T-cell (primary cell): ENCODE measurements at regions of chr12 and their contacts with region 1.

Region 1: DNA sequence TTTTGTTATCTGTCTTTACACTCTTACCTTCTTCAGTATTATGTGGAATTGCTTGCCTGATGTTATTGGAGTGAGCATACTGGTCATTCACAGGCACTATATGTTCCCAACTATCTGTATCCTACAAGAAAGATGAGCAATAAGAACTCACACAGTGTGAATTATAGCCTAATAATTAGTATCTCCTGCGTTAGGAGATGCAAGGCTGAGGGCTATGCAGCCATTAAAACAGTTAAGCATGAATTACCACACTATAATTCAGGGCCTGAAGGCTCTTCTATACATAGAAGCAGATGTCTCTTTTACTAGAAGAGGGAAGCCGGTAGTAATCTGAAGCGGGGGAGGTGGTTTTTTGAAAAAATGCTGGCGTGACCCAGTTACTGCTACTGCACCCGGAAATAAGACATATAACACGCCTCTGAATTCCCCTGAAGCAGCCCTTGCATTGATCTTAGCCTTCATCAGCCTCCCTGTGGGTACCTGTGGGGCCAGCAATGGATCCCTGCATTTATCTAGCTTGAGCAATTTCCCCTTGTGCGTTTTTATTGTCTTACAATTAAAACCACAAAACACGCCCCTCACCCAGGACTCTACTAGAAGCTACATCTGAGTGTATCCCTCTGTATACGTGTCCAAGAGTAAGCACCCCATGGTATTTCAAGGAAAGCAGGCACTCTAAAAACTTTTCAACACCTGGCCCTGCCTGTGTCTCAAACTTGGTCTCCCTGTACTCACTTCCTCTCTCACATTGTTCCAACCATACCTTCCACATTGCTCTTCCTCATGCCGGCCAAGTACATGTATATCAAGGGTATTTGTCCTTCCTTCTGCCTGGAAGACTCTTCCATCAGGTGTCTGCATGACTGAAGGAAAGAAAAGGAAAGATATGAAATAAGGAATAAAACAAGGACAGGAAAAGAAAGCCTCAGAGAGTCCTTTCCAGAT is 210.9 kb upstream of the ARID2 start:
- DNase-seq: peak in 34 of 35 experiments; percentile 9 to 80 (median 50)
- ATAC-seq: peak; percentile 94 to 99 (median 96)
- H3K4me3 ChIP-seq: no peak overlapping the region
- H3K4me3 Mint-ChIP-seq: peak overlapping the region in 1 of 3 donors; percentile 47
- H3K27ac ChIP-seq: peak overlapping the region; percentile 66
- H3K27ac Mint-ChIP-seq: peak overlapping the region; percentile 83 to 86
- H3K4me1 ChIP-seq: peaks cover 9 to 10% of the 10 kb centered on the region in 2 experiments
- H3K4me1 Mint-ChIP-seq: peaks cover 14 to 18% (median 17%) of the 10 kb centered on the region in 3 donors
- H3K27me3 ChIP-seq: peaks cover 0 to 2% of the 10 kb centered on the region in 2 experiments
- H3K27me3 Mint-ChIP-seq: no peaks in the 10 kb centered on the region

Region 2: GRCh38 chr12:45504316-45505010 is 14.1 kb before region 1 on chr12:
- CTCF ChIA-PET with region 1: interaction called, 5 to 10 read pairs
- POLR2A ChIA-PET with region 1: no interaction called
- DNase-seq: no peak
- ATAC-seq: no peak
- H3K4me3 ChIP-seq: no peak overlapping the region
- H3K4me3 Mint-ChIP-seq: no peak overlapping the region
- H3K27ac ChIP-seq: no peak overlapping the region
- H3K27ac Mint-ChIP-seq: no peak overlapping the region
- H3K4me1 ChIP-seq: no peaks in the 10 kb centered on the region
- H3K4me1 Mint-ChIP-seq: peaks cover 0 to 4% (median 0%) of the 10 kb centered on the region in 3 donors
- H3K27me3 ChIP-seq: peaks cover 0 to 3% of the 10 kb centered on the region in 2 experiments
- H3K27me3 Mint-ChIP-seq: peaks cover 0 to 1% of the 10 kb centered on the region in 2 donors

Region 3: GRCh38 chr12:45557016-45557415 is 38.5 kb after region 1 on chr12:
- CTCF ChIA-PET with region 1: no interaction called
- POLR2A ChIA-PET with region 1: no interaction called
- DNase-seq: no peak
- ATAC-seq: no peak
- H3K4me3 ChIP-seq: no peak overlapping the region
- H3K4me3 Mint-ChIP-seq: no peak overlapping the region
- H3K27ac ChIP-seq: no peak overlapping the region
- H3K27ac Mint-ChIP-seq: no peak overlapping the region
- H3K4me1 ChIP-seq: no peaks in the 10 kb centered on the region
- H3K4me1 Mint-ChIP-seq: peaks cover 0 to 4% (median 0%) of the 10 kb centered on the region in 3 donors
- H3K27me3 ChIP-seq: no peaks in the 10 kb centered on the region
- H3K27me3 Mint-ChIP-seq: no peaks in the 10 kb centered on the region

Region 4: GRCh38 chr12:45615268-45615667 is 96.7 kb after region 1 on chr12:
- CTCF ChIA-PET with region 1: no interaction called
- POLR2A ChIA-PET with region 1: no interaction called
- DNase-seq: no peak
- ATAC-seq: no peak
- H3K4me3 ChIP-seq: no peak overlapping the region
- H3K4me3 Mint-ChIP-seq: no peak overlapping the region
- H3K27ac ChIP-seq: no peak overlapping the region
- H3K27ac Mint-ChIP-seq: no peak overlapping the region
- H3K4me1 ChIP-seq: no peaks in the 10 kb centered on the region
- H3K4me1 Mint-ChIP-seq: peaks cover 0 to 5% (median 3%) of the 10 kb centered on the region in 3 donors
- H3K27me3 ChIP-seq: peaks cover 0 to 3% of the 10 kb centered on the region in 2 experiments
- H3K27me3 Mint-ChIP-seq: peaks cover 0 to under 1% of the 10 kb centered on the region in 2 donors

Region 5: GRCh38 chr12:45703942-45704341 is 185.4 kb after region 1 on chr12:
- CTCF ChIA-PET with region 1: no interaction called
- POLR2A ChIA-PET with region 1: no interaction called
- DNase-seq: no peak
- ATAC-seq: no peak
- H3K4me3 ChIP-seq: no peak overlapping the region
- H3K4me3 Mint-ChIP-seq: no peak overlapping the region
- H3K27ac ChIP-seq: no peak overlapping the region
- H3K27ac Mint-ChIP-seq: no peak overlapping the region
- H3K4me1 ChIP-seq: no peaks in the 10 kb centered on the region
- H3K4me1 Mint-ChIP-seq: no peaks in the 10 kb centered on the region
- H3K27me3 ChIP-seq: no peaks in the 10 kb centered on the region
- H3K27me3 Mint-ChIP-seq: no peaks in the 10 kb centered on the region